Colonic mucosa (tissue), 4 donors: ENCODE measurements at regions of chr16 and their contacts with region 1.

Region 1: GRCh38 chr16:3400779-3401688 is at the starts of genes ZNF174 and ZSCAN32:
- DNase-seq: peak; percentile 99
- H3K4me3 ChIP-seq: peak within 1 kb of the TSS; percentile 90
- H3K27ac ChIP-seq: peak within 1 kb of the TSS; percentile 82
- H3K4me1 ChIP-seq: no peaks in the 10 kb centered on the region
- H3K27me3 ChIP-seq: no peaks in the 10 kb centered on the region
- CTCF ChIP-seq: no peak
- total RNA-seq, gene ZNF174: 6.7 to 6.8 TPM
- total RNA-seq, gene ZSCAN32: 7.2 to 7.5 TPM

Region 2: GRCh38 chr16:3214904-3215600 is 186.0 kb before region 1 on chr16:
- intact Hi-C with region 1: no loop called
- DNase-seq: no peak
- H3K4me3 ChIP-seq: no peak overlapping the region
- H3K27ac ChIP-seq: no peak overlapping the region
- H3K4me1 ChIP-seq: no peaks in the 10 kb centered on the region
- H3K27me3 ChIP-seq: no peaks in the 10 kb centered on the region
- CTCF ChIP-seq: no peak

Region 3: GRCh38 chr16:3246876-3247275 is 154.2 kb before region 1 on chr16:
- intact Hi-C with region 1: no loop called
- DNase-seq: no peak
- H3K4me3 ChIP-seq: no peak overlapping the region
- H3K27ac ChIP-seq: no peak overlapping the region
- H3K4me1 ChIP-seq: no peaks in the 10 kb centered on the region
- H3K27me3 ChIP-seq: no peaks in the 10 kb centered on the region
- CTCF ChIP-seq: no peak

Region 4: GRCh38 chr16:3498988-3499387 is 98.0 kb after region 1 on chr16:
- intact Hi-C with region 1: loop called (anchors 5 kb)
- DNase-seq: no peak
- H3K4me3 ChIP-seq: no peak overlapping the region
- H3K27ac ChIP-seq: no peak overlapping the region
- H3K4me1 ChIP-seq: no peaks in the 10 kb centered on the region
- H3K27me3 ChIP-seq: no peaks in the 10 kb centered on the region
- CTCF ChIP-seq: no peak

Region 5: GRCh38 chr16:3509470-3509928 is 108.5 kb after region 1 on chr16:
- intact Hi-C with region 1: no loop called
- DNase-seq: peak; percentile 22
- H3K4me3 ChIP-seq: no peak overlapping the region
- H3K27ac ChIP-seq: no peak overlapping the region
- H3K4me1 ChIP-seq: no peaks in the 10 kb centered on the region
- H3K27me3 ChIP-seq: no peaks in the 10 kb centered on the region
- CTCF ChIP-seq: no peak